GM23248 (cell line): ENCODE measurements at regions of chr19 and their contacts with region 1.

Region 1: DNA sequence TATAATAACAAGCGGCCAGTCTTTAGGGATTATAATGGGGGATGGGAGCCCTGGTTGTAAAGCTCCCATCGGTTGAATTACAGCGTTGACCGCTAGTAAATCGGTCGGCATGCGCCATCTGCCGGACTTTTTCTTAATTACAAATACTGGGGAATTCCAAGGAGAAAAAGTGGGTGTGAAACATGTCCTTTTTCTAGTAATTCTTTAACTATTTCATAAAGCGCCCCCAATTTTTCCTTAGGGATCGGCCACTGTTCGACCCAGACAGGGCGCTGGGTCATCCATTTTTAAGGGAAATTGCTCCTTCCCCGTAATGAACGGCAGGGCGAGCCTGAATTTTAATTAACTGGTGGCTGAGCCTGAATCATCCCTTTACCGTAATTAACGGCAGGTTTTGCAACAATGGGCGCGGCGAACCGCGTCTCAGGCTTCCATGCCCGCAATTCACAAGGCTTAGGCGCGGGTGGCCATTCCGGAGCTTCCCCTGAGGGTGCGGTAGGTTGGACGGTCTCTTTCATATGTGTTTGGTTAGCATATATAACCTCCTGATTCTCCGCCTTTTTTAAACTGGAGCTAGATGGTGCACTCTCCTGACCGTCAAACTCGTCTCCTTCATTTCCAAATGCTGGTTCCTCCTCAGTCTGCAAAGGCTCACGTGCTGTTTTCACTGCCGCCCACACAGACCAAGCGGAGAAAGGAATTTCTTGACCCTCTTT is 30.2 kb upstream of the EVI5L start:
- DNase-seq: peak; percentile 87
- H3K4me3 ChIP-seq: peak overlapping the region; percentile 62
- H3K27ac ChIP-seq: no peak overlapping the region
- H3K4me1 ChIP-seq: 0 out of 2 replicates have a peak, but pooled peaks cover 3% of the 10 kb centered on the region
- H3K27me3 ChIP-seq: peaks cover 27% of the 10 kb centered on the region

Region 2: GRCh38 chr19:7366701-7367420 is 432.9 kb before region 1 on chr19:
- in situ Hi-C with region 1: loop called (anchors 25 kb)
- DNase-seq: peak; percentile 12
- H3K4me3 ChIP-seq: no peak overlapping the region
- H3K27ac ChIP-seq: no peak overlapping the region
- H3K4me1 ChIP-seq: peaks cover 8% of the 10 kb centered on the region
- H3K27me3 ChIP-seq: no peaks in the 10 kb centered on the region

Region 3: DNA sequence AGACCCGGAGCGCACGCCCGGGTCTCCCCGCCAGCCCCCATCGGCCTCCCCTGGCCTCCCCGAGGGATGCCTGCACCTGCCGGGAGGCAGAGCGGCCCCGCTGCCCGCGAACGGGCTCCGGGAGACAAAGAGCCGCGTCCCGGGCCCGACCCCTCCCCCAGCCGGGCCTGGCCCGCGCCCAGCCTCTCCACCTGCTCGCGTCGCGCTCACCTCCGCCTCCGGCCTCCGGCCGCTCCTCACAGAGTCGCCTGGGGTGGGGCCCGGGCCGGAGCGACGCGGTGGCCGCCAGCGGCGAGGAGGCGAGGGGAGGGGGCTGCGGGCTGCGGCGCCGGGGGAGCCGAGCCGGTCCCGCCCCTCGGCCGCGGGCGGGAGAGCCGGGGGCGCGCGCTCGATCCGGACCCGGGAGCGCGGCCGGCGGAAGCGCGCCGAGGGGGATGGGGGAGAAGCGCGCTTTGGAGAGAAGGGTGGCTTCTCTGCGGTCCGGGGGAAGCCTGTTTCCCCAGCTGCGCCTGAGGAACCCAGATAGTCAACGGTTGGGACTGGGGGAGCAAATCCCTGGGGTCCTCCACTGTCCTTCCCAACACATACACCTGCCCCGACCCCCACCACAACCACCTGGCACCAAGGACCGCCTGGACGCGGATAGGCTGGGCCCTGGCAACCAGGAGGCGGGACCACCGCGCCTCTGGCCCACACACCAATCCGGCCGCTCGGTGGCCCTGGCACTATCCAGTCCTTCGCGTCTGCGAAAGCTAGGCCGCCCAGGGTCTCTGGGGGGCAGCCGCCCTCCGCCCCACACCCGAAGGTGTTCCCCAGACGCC is 74.5 kb after region 1 on chr19 and contains the start of gene PRR36:
- in situ Hi-C with region 1: no loop called
- DNase-seq: no peak
- H3K4me3 ChIP-seq: no peak within 1 kb of the TSS
- H3K27ac ChIP-seq: no peak within 1 kb of the TSS
- H3K4me1 ChIP-seq: no peaks in the 10 kb centered on the region; the same call in 1 of the 2 replicates
- H3K27me3 ChIP-seq: peaks cover 22% of the 10 kb centered on the region
- total RNA-seq, gene PRR36: not detected in 2 replicates

Region 4: DNA sequence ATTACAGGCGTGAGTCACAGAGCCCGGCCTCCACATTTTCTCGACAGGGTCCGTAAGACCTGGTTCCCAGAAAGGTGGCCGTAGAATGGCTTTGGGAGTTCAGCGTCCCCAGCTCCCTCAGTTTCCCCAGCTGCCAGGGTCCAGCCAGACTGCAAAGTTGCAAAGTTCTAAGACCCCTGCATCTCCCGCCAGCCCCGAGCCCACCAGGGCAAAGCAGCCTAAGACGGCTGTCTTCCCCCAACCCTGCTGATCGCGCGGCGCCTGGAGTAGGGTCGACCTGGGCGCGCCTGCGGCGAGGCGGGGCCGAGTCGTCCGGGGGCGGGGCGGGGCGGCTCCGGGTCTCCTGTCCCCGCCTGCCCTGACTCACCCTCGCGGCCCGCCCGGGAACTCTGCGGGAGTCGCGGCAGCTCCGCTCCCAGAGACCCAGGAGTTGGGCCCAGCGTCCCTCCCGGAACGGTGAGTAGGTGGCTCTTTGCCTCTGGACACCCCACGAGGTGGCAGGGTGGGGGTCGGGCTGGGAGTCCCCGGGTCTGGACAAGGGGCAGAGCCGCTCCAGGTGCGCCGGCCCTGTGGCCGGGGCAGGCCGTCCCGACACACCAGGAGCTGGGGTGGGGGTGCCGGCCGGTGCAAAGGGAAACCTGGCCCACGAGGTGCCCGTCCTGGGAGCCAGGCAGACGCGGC is 88.5 kb after region 1 on chr19 and contains the start of gene LRRC8E:
- in situ Hi-C with region 1: no loop called
- DNase-seq: peak; percentile 88
- H3K4me3 ChIP-seq: peak within 1 kb of the TSS; percentile 88
- H3K27ac ChIP-seq: no peak within 1 kb of the TSS
- H3K4me1 ChIP-seq: no peaks in the 10 kb centered on the region
- H3K27me3 ChIP-seq: no peaks in the 10 kb centered on the region
- total RNA-seq, gene LRRC8E: 3.5 and 3.6 TPM in 2 replicates